Colonic mucosa (tissue), 4 donors: ENCODE measurements at regions of chr5 and their contacts with region 1.

Region 1: DNA sequence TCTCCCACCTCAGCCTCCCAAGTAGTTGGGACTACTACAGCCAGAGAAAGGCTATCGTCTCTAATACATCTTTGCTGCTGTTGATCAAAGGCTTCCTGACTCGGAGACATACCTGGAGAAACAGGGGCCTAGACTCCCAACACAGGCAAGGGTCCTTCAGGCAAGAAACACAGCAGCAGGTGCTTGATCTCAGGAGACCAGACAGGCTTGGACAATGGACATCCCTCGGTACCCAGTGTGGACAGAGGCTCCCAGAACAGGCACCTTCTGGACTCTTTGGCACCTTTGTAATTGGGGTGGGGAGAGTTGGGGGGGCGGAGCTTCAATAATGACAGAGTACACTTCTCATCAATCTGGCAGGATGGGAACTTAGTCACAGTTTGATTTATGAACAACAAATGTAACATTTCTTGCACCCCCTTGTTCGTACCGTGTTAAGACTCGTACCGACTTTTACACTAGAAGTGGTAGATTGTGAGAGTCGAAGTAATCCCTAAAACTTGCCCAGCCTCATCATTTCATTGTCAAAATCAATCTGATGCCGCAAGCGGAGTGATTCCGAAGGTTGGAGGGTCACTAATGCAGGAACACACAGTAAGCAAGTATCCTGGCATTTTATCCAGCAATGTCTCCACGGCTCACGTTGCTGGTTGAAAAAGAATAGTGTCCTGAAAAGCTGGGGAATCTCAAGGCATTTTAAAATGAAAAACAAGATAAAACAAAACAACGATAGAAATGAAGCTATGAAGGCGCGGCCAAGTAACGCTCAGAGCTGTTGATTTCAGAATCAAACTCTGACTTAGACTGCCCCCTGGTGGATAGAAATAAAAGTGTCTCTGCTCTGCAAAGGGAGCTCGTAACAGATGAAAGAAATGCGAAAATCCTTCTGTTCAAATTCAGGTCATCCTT is 46.4 kb upstream of the STK32A start:
- DNase-seq: peak; percentile 58
- H3K4me3 ChIP-seq: no peak overlapping the region
- H3K27ac ChIP-seq: no peak overlapping the region
- H3K4me1 ChIP-seq: no peaks in the 10 kb centered on the region
- H3K27me3 ChIP-seq: no peaks in the 10 kb centered on the region
- CTCF ChIP-seq: peak; percentile 83

Region 2: GRCh38 chr5:146541958-146542849 is 646.2 kb before region 1 on chr5:
- intact Hi-C with region 1: loop called (anchors 5 kb)
- DNase-seq: peak; percentile 76
- H3K4me3 ChIP-seq: no peak overlapping the region
- H3K27ac ChIP-seq: no peak overlapping the region
- H3K4me1 ChIP-seq: no peaks in the 10 kb centered on the region
- H3K27me3 ChIP-seq: no peaks in the 10 kb centered on the region
- CTCF ChIP-seq: peak; percentile 79

Region 3: DNA sequence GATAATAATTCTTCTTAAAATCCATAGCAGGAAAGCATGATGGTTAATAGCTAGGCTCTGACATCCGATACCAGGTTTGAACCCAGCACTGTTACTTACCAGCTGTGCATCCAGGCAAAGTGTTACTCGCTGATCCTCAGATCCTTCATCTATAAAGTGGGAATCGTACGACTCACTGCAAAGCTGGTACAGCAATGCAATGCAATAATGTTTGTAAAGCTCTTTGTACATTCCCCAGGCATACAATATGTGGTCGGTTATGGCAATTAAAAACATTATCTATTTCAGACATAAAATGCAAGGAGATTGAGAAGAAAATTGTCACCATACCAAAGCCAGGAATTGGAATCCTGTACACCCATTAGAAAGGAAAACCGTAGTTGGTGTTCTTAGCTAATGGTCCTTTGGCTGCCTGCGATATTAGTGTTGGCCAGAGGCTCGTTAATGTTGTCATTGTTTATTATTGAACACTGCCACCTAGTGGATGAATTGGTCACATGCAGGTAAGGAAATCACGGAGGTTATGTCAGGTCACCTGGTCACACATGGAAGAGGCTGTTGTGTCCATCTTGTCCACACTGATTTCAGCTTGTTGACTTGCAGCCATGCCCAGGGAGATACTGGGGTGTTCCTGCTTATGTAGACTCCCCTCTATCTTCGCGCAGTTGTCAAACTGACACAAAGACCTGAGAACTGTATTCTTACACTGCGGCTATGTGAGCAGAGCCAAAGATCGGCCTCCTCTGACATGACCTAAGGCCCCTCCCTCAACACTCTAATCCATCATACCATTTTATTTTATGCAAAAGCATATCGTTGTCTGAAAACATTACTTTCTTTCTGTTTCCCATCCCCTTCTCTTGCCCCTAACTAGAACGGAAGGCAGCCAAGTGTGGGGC is 222.4 kb before region 1 on chr5:
- intact Hi-C with region 1: loop called (anchors 10 kb)
- DNase-seq: peak; percentile 58
- H3K4me3 ChIP-seq: no peak overlapping the region
- H3K27ac ChIP-seq: no peak overlapping the region
- H3K4me1 ChIP-seq: no peaks in the 10 kb centered on the region
- H3K27me3 ChIP-seq: no peaks in the 10 kb centered on the region
- CTCF ChIP-seq: peak; percentile 91

Region 4: GRCh38 chr5:147072622-147073021 is 115.8 kb before region 1 on chr5:
- intact Hi-C with region 1: no loop called
- DNase-seq: no peak
- H3K4me3 ChIP-seq: no peak overlapping the region
- H3K27ac ChIP-seq: no peak overlapping the region
- H3K4me1 ChIP-seq: no peaks in the 10 kb centered on the region
- H3K27me3 ChIP-seq: no peaks in the 10 kb centered on the region
- CTCF ChIP-seq: no peak

Region 5: GRCh38 chr5:147098233-147098790 is 90.1 kb before region 1 on chr5:
- intact Hi-C with region 1: loop called (anchors 2 kb)
- DNase-seq: peak; percentile 31
- H3K4me3 ChIP-seq: no peak overlapping the region
- H3K27ac ChIP-seq: no peak overlapping the region
- H3K4me1 ChIP-seq: no peaks in the 10 kb centered on the region
- H3K27me3 ChIP-seq: no peaks in the 10 kb centered on the region
- CTCF ChIP-seq: peak; percentile 40